Esophagus muscularis mucosa (tissue), 4 donors: ENCODE measurements at regions of chr14 and their contacts with region 1.

Region 1: GRCh38 chr14:68979021-68979782 is at the start of gene ACTN1:
- DNase-seq: peak; percentile 98
- H3K4me3 ChIP-seq: peak within 1 kb of the TSS; percentile 71 to 79 (median 77)
- H3K27ac ChIP-seq: peak within 1 kb of the TSS; percentile 97 to 100 (median 98)
- H3K4me1 ChIP-seq: peaks cover 37 to 75% (median 71%) of the 10 kb centered on the region in 4 donors
- H3K27me3 ChIP-seq: no peaks in the 10 kb centered on the region
- CTCF ChIP-seq: peak in 1 of 3 experiments; percentile 5
- EP300 ChIP-seq: peak; percentile 32
- POLR2A ChIP-seq: peak; percentile 93
- total RNA-seq, gene ACTN1: 958 to 2,110 (median 1,439) TPM

Region 2: GRCh38 chr14:68762953-68763764 is 216.0 kb before region 1 on chr14:
- intact Hi-C with region 1: no loop called
- DNase-seq: no peak
- H3K4me3 ChIP-seq: no peak overlapping the region
- H3K27ac ChIP-seq: peak overlapping the region; percentile 48 to 69 (median 58)
- H3K4me1 ChIP-seq: peaks cover 18 to 32% (median 21%) of the 10 kb centered on the region in 4 donors
- H3K27me3 ChIP-seq: no peaks in the 10 kb centered on the region
- CTCF ChIP-seq: no peak
- EP300 ChIP-seq: no peak
- POLR2A ChIP-seq: no peak

Region 3: GRCh38 chr14:68911594-68912227 is 67.5 kb before region 1 on chr14:
- intact Hi-C with region 1: loop called (anchors 10 kb)
- DNase-seq: no peak
- H3K4me3 ChIP-seq: no peak overlapping the region
- H3K27ac ChIP-seq: peak overlapping the region; percentile 90 to 98 (median 97)
- H3K4me1 ChIP-seq: peaks cover 10 to 96% (median 92%) of the 10 kb centered on the region in 4 donors
- H3K27me3 ChIP-seq: no peaks in the 10 kb centered on the region
- CTCF ChIP-seq: peak in 2 of 3 experiments; percentile 98 to 99
- EP300 ChIP-seq: no peak
- POLR2A ChIP-seq: no peak

Region 4: GRCh38 chr14:68939893-68940613 is 39.1 kb before region 1 on chr14:
- intact Hi-C with region 1: loop called (anchors 5 kb)
- DNase-seq: no peak
- H3K4me3 ChIP-seq: peak overlapping the region in 1 of 4 donors; percentile 9
- H3K27ac ChIP-seq: peak overlapping the region; percentile 90 to 98 (median 97)
- H3K4me1 ChIP-seq: peaks cover 97 to 100% (median 100%) of the 10 kb centered on the region in 4 donors
- H3K27me3 ChIP-seq: no peaks in the 10 kb centered on the region
- CTCF ChIP-seq: no peak
- EP300 ChIP-seq: peak; percentile 5
- POLR2A ChIP-seq: no peak

Region 5: GRCh38 chr14:69045857-69046475 is 66.8 kb after region 1 on chr14:
- intact Hi-C with region 1: loop called (anchors 2 kb)
- DNase-seq: no peak
- H3K4me3 ChIP-seq: no peak overlapping the region
- H3K27ac ChIP-seq: peak overlapping the region; percentile 79 to 83 (median 80)
- H3K4me1 ChIP-seq: peaks cover 78 to 89% (median 86%) of the 10 kb centered on the region in 4 donors
- H3K27me3 ChIP-seq: no peaks in the 10 kb centered on the region
- CTCF ChIP-seq: no peak
- EP300 ChIP-seq: no peak
- POLR2A ChIP-seq: no peak

Region 6: GRCh38 chr14:69090187-69090789 is 111.1 kb after region 1 on chr14:
- intact Hi-C with region 1: loop called (anchors 5 kb)
- DNase-seq: peak; percentile 4
- H3K4me3 ChIP-seq: no peak overlapping the region
- H3K27ac ChIP-seq: peak overlapping the region; percentile 79 to 90 (median 88)
- H3K4me1 ChIP-seq: peaks cover 21 to 82% (median 77%) of the 10 kb centered on the region in 4 donors
- H3K27me3 ChIP-seq: no peaks in the 10 kb centered on the region
- CTCF ChIP-seq: peak; percentile 55 to 73 (median 72)
- EP300 ChIP-seq: no peak
- POLR2A ChIP-seq: no peak